Body of pancreas (tissue), 4 donors: ENCODE measurements at regions of chr3 and their contacts with region 1.

Region 1: GRCh38 chr3:140898340-140899180 is 43.1 kb upstream of the SLC25A36 start:
- DNase-seq: peak; percentile 19 to 66 (median 32)
- ATAC-seq: peak; percentile 83
- H3K4me3 ChIP-seq: no peak overlapping the region
- H3K27ac ChIP-seq: no peak overlapping the region
- H3K4me1 ChIP-seq: peaks cover 6% of the 10 kb centered on the region
- H3K27me3 ChIP-seq: no peaks in the 10 kb centered on the region
- CTCF ChIP-seq: peak; percentile 29 to 92 (median 80)
- POLR2A ChIP-seq: no peak

Region 2: GRCh38 chr3:140816372-140817195 is 82.0 kb before region 1 on chr3:
- intact Hi-C with region 1: no loop called
- DNase-seq: no peak
- ATAC-seq: no peak
- H3K4me3 ChIP-seq: no peak overlapping the region
- H3K27ac ChIP-seq: no peak overlapping the region
- H3K4me1 ChIP-seq: no peaks in the 10 kb centered on the region
- H3K27me3 ChIP-seq: no peaks in the 10 kb centered on the region
- CTCF ChIP-seq: no peak
- POLR2A ChIP-seq: no peak

Region 3: GRCh38 chr3:141184430-141184829 is 285.9 kb after region 1 on chr3:
- intact Hi-C with region 1: loop called (anchors 10 kb)
- DNase-seq: no peak
- ATAC-seq: no peak
- H3K4me3 ChIP-seq: no peak overlapping the region
- H3K27ac ChIP-seq: no peak overlapping the region
- H3K4me1 ChIP-seq: no peaks in the 10 kb centered on the region
- H3K27me3 ChIP-seq: no peaks in the 10 kb centered on the region
- CTCF ChIP-seq: no peak
- POLR2A ChIP-seq: no peak